HEK293 (cell line): ENCODE measurements at regions of chr10 and their contacts with region 1.

Region 1: DNA sequence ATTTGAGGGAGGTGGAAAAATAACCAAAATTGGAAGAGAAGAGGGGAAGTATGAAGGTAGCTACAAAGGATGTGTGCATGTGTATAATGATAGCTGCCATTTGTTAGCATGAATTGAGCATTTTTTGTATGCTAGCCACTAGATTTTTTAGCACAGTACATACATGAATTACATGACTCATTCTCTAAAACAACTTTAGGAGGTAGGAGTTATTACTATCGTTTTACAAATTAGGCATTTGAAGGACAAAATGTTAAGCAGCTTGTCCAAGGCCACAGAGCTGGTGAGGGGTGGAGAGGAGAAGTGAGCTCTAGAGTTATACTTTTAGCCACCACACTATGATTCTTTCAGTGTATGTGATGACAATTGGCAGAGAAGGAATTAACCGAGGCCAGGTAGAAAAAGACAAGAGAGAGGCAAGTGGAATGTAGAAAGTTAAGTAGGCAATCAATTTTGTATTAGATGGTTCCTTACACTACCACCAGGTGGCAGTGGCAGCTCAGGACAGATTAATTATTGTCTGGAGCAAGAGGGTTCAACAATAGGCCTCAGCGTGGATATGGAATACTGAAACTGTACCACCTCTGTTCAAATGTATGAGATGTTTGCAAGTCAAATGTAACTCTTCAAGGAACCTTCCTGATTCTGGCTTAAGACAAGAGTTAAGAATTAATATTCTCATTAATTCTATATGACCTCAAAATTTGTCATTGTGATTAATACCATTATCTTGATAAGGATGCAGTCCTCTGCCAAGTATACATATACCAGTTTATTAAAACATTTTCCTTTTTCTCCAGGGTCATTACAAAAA is 128.0 kb downstream of the MBL2 start:
- H3K4me3 ChIP-seq: no peak overlapping the region
- H3K27ac ChIP-seq: no peak overlapping the region
- H3K4me1 ChIP-seq: no peaks in the 10 kb centered on the region
- CTCF ChIP-seq: peak; percentile 74

Region 2: GRCh38 chr10:52226197-52226847 is 418.3 kb before region 1 on chr10:
- CTCF ChIA-PET with region 1: no interaction called
- POLR2A ChIA-PET with region 1: no interaction called
- H3K4me3 ChIP-seq: no peak overlapping the region
- H3K27ac ChIP-seq: no peak overlapping the region
- H3K4me1 ChIP-seq: no peaks in the 10 kb centered on the region
- CTCF ChIP-seq: no peak

Region 3: GRCh38 chr10:52729271-52730104 is 84.9 kb after region 1 on chr10:
- CTCF ChIA-PET with region 1: interaction called, 90 read pairs
- POLR2A ChIA-PET with region 1: no interaction called
- H3K4me3 ChIP-seq: no peak overlapping the region
- H3K27ac ChIP-seq: no peak overlapping the region
- H3K4me1 ChIP-seq: no peaks in the 10 kb centered on the region
- CTCF ChIP-seq: 0 out of 2 replicates have a peak, but pooled peaks have one; percentile 14